ENCODE measurements at regions of chr6 and their contacts with region 1.

Region 1: DNA sequence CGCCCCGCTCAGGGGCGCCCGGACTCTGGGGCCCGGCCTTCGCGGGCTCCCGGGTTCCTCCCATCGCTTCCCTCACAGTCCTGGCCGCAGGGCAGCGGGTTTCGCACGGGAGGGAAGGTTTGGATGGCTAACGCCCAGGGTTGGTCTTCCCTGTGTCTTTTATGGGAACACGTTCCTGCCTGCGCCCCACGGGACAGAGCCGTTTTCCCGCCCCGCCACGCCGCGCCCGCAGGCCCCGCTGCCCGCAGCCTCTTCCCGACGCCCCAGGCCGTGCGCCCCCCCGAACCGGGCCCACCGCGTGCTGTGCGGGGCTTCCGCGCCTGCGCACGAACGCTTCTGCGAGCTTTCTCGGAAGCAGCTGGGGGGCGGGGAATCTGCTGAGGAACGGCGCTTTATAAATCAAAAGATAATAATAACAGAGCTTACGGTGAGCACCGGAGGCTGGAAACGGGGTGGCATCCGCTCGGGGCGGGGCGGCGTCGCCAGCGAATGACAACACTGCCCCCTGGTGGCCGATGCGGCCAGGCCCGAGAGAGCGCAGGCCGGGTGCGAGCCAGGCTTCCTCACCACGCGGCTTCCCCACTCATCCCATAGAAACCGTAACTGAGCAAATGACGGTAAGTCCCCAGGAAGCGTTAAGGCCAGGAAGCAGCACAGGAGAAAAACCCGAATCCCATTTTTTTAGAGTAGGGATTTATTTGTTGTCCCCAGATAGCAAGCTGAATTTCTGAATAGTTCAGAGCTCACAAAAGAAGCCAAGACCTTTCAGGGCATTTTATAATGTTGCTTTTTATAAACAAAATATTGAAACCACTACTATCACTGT is 116.4 kb downstream of the MYLK4 start:
- DNase-seq: peak; percentile 82 to 91 (median 88)
- H3K4me3 ChIP-seq: peak overlapping the region; percentile 41
- H3K27ac ChIP-seq: peak overlapping the region; percentile 15 to 34
- H3K4me1 ChIP-seq: peaks cover 5% of the 10 kb centered on the region
- H3K27me3 ChIP-seq: no peaks in the 10 kb centered on the region
- CTCF ChIP-seq: peak; percentile 91 to 99 (median 96)
- EP300 ChIP-seq: no peak
- POLR2A ChIP-seq: no peak

Region 2: GRCh38 chr6:2353412-2354137 is 280.8 kb before region 1 on chr6:
- intact Hi-C with region 1: loop called in 1 of 4 experiments (anchors 10 kb)
- DNase-seq: peak; percentile 41 to 75 (median 63)
- H3K4me3 ChIP-seq: no peak overlapping the region
- H3K27ac ChIP-seq: no peak overlapping the region
- H3K4me1 ChIP-seq: peaks cover 5% of the 10 kb centered on the region
- H3K27me3 ChIP-seq: no peaks in the 10 kb centered on the region
- CTCF ChIP-seq: peak; percentile 50 to 70 (median 69)
- EP300 ChIP-seq: no peak
- POLR2A ChIP-seq: no peak

Region 3: GRCh38 chr6:2448820-2449571 is 185.4 kb before region 1 on chr6:
- intact Hi-C with region 1: no loop called
- DNase-seq: no peak
- H3K4me3 ChIP-seq: no peak overlapping the region
- H3K27ac ChIP-seq: no peak overlapping the region
- H3K4me1 ChIP-seq: no peaks in the 10 kb centered on the region
- H3K27me3 ChIP-seq: no peaks in the 10 kb centered on the region
- CTCF ChIP-seq: no peak
- EP300 ChIP-seq: no peak
- POLR2A ChIP-seq: no peak

Region 4: GRCh38 chr6:2853761-2854395 is 219.5 kb after region 1 on chr6:
- intact Hi-C with region 1: no loop called
- DNase-seq: peak in 1 of 5 donors; percentile 61
- H3K4me3 ChIP-seq: peak overlapping the region; percentile 28
- H3K27ac ChIP-seq: peak overlapping the region; percentile 18 to 64
- H3K4me1 ChIP-seq: peaks cover 10% of the 10 kb centered on the region
- H3K27me3 ChIP-seq: no peaks in the 10 kb centered on the region
- CTCF ChIP-seq: peak in 1 of 3 donors; percentile 30
- EP300 ChIP-seq: no peak
- POLR2A ChIP-seq: no peak

Measured in ovary (tissue), 10 donors.